ENCODE measurements at regions of chr15 and their contacts with region 1.

Region 1: DNA sequence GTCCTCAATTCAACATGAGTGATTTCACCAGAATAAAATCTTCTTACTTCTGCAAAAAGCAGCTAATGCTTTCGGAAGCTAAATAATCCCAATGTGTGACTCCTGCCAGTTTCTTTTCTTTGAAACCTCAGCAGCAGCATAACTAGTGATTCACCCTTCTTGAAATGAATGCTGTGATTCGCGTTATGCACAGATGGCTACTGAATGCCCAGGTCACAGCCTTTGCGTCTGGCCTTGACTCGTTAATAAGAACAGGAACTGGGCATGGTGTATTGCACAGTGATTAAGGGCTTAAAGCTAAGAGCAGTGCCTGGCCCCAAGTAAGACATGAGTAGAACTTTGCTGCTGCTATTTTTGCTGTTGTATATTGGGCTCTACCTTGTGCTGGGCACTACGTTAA is 19.0 kb downstream of the CGNL1 start:
- DNase-seq: peak; percentile 91
- H3K4me3 ChIP-seq: no peak overlapping the region
- H3K27ac ChIP-seq: no peak overlapping the region
- H3K4me1 ChIP-seq: peaks cover 56% of the 10 kb centered on the region
- H3K27me3 ChIP-seq: no peaks in the 10 kb centered on the region
- CTCF ChIP-seq: no peak
- POLR2A ChIP-seq: no peak

Region 2: GRCh38 chr15:57375827-57376695 is 19.2 kb before region 1 on chr15 and contains the start of gene CGNL1:
- CTCF ChIA-PET with region 1: interaction called, 10 read pairs
- POLR2A ChIA-PET with region 1: no interaction called
- dilution Hi-C with region 1: no loop called
- intact Hi-C with region 1: no loop called
- DNase-seq: peak; percentile 49
- H3K4me3 ChIP-seq: peak within 1 kb of the TSS; percentile 15 to 87 (median 53)
- H3K27ac ChIP-seq: peak within 1 kb of the TSS; percentile 2
- H3K4me1 ChIP-seq: peaks cover 25% of the 10 kb centered on the region
- H3K27me3 ChIP-seq: peaks cover 0 to 3% of the 10 kb centered on the region in 2 experiments
- CTCF ChIP-seq: no peak
- POLR2A ChIP-seq: peak; percentile 66
- total RNA-seq, gene CGNL1: 25.7 and 27.1 TPM in 2 replicates

Region 3: DNA sequence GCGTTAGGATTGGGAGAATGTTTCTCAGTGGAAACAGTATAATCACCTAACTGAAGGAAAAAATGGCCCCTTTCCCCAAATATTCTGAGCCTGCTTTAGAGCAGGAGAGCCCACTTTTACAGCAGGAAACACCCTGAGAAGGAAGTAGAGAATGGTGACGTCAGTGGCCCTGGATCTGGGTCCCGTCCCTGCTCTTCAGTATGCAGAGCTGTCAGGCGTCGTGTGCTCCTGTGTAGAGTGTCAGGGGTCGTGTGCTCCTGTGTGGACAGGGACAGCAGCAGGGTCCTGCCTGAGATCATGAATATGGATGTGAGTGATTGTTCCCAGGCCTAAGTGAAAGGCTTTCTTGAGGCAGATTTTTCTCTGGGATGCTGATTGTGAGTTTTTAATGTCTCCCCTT is 26.3 kb after region 1 on chr15:
- CTCF ChIA-PET with region 1: no interaction called
- POLR2A ChIA-PET with region 1: no interaction called
- dilution Hi-C with region 1: no loop called
- intact Hi-C with region 1: no loop called
- DNase-seq: no peak
- H3K4me3 ChIP-seq: no peak overlapping the region
- H3K27ac ChIP-seq: no peak overlapping the region
- H3K4me1 ChIP-seq: peaks cover 3% of the 10 kb centered on the region
- H3K27me3 ChIP-seq: no peaks in the 10 kb centered on the region
- CTCF ChIP-seq: no peak
- POLR2A ChIP-seq: no peak

Region 4: DNA sequence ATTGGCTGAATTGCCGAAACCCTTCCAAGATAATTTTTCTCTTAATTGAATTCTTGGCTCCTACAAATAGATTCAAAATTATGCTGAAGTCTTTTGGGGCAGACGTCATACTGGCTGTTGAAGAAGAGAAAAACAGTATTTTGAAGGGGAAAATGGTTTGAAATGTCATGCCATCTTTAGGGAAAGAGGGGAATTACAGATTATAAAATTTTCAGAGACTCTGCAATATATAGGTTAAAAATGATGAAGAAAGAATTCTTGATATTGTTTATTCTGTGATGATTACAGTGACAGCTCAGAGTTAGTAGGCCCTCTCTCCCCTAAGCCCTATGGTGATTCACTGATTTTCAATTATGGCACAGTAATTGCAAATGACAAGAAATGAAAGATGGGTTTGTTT is 67.1 kb after region 1 on chr15:
- CTCF ChIA-PET with region 1: interaction called, 3 read pairs
- POLR2A ChIA-PET with region 1: no interaction called
- dilution Hi-C with region 1: no loop called
- intact Hi-C with region 1: loop called (anchors 1 kb)
- DNase-seq: peak; percentile 52
- H3K4me3 ChIP-seq: no peak overlapping the region
- H3K27ac ChIP-seq: no peak overlapping the region
- H3K4me1 ChIP-seq: peaks cover 29% of the 10 kb centered on the region
- H3K27me3 ChIP-seq: no peaks in the 10 kb centered on the region
- CTCF ChIP-seq: no peak
- POLR2A ChIP-seq: no peak

Measured in endothelial cell of umbilical vein (primary cell).